Tibial artery (tissue), 4 donors: ENCODE measurements at regions of chr11 and their contacts with region 1.

Region 1: DNA sequence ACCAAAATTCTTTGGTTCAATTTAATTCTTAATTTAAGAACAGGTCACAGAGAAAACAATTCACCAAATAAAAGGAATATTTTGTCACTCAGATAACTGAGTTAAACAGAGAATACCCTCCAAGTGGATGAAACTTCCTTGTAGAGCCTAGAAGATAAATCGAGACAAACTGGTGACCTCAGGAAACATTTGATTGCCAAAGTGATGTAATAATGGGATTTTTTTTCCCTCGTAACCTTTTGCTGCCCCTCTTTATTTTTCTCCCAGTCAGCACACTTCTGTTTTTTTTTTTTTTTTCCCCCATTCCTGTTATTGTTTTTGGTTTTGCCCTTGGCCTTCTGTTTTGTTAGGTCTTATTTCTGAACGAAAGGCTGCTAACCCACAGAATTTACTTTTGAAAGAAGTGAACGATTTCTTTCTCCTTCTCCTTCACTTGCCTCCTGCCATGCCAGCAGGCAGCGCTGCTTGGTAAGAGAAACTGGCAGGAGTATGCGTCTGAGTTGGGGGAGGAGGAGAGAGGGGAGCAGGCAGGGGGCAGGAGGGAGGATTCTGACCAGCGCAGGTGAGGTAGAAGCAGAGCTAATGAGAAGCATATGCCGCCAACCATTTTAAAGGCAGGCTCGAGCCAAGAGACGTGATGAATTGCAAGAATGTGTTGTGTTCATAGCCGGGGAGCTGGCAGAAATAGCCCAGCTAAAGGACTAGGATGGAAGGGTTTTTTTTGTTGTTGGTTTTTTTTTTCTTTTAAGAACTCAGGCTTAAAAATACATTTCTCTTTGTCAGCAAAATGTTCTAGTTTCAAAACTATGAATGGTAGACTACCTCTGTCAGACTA is 121.9 kb upstream of the MTMR2 start:
- DNase-seq: peak; percentile 68 to 81
- H3K4me3 ChIP-seq: peak overlapping the region; percentile 42 to 49
- H3K27ac ChIP-seq: peak overlapping the region; percentile 71 to 75
- H3K4me1 ChIP-seq: peaks cover 0 to 14% (median 11%) of the 10 kb centered on the region in 4 donors
- H3K27me3 ChIP-seq: no peaks in the 10 kb centered on the region
- CTCF ChIP-seq: peak; percentile 38 to 50

Region 2: GRCh38 chr11:95699631-95700470 is 346.0 kb before region 1 on chr11:
- intact Hi-C with region 1: no loop called
- DNase-seq: no peak
- H3K4me3 ChIP-seq: no peak overlapping the region
- H3K27ac ChIP-seq: peak overlapping the region; percentile 55 to 81
- H3K4me1 ChIP-seq: peaks cover 0 to 77% (median 43%) of the 10 kb centered on the region in 4 donors
- H3K27me3 ChIP-seq: no peaks in the 10 kb centered on the region
- CTCF ChIP-seq: no peak

Region 3: DNA sequence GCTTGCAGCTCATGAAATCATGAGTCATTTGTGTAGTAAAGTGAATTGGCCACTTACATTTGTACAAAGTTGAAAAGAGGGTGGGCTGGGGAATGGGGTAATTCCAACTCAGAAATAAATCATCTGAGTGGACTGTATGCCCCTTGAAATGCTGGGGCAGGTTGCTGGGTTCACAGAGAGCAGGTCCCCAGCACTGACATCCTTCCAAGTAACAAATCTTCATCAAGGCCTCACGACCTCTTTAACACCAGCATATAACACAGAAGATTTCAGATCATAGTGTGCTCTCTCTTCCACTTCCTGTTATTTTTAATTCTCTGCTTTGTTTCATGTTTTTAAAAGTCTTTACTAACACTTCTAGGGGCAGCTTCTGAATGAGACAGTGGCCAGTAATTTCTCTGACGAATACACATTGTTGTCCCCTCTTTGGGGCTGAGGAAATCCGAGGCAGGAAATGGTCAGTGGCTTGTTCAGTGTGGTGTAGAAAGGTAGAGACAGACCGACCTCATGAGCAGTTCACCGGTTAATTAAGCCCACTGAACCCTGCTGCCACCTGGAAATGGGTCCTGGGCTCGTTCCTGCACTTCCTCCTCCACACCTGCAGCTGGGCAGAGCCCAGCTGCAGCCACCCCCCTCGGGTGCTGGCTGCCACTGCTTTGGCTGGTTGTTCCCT is 169.4 kb after region 1 on chr11:
- intact Hi-C with region 1: loop called (anchors 5 kb)
- DNase-seq: no peak
- H3K4me3 ChIP-seq: no peak overlapping the region
- H3K27ac ChIP-seq: peak overlapping the region; percentile 72 to 74
- H3K4me1 ChIP-seq: peaks cover 0 to 90% (median 72%) of the 10 kb centered on the region in 4 donors
- H3K27me3 ChIP-seq: no peaks in the 10 kb centered on the region
- CTCF ChIP-seq: no peak